ENCODE measurements at regions of chr12 and their contacts with region 1.

Region 1: GRCh38 chr12:16573398-16574077 is 32.4 kb downstream of the LMO3 start:
- DNase-seq: peak in 1 of 2 donors; percentile 95
- H3K4me3 ChIP-seq: no peak overlapping the region
- H3K27ac ChIP-seq: no peak overlapping the region
- H3K4me1 ChIP-seq: no peaks in the 10 kb centered on the region
- H3K27me3 ChIP-seq: no peaks in the 10 kb centered on the region
- CTCF ChIP-seq: no peak
- POLR2A ChIP-seq: no peak

Region 2: GRCh38 chr12:16606201-16606849 is 32.8 kb after region 1 on chr12:
- intact Hi-C with region 1: loop called (anchors 1 kb)
- DNase-seq: no peak
- H3K4me3 ChIP-seq: peak overlapping the region; percentile 51 to 57
- H3K27ac ChIP-seq: peak overlapping the region; percentile 82
- H3K4me1 ChIP-seq: peaks cover 4% of the 10 kb centered on the region
- H3K27me3 ChIP-seq: no peaks in the 10 kb centered on the region
- CTCF ChIP-seq: no peak
- POLR2A ChIP-seq: no peak

Region 3: GRCh38 chr12:17793854-17794253 is 1220.3 kb after region 1 on chr12:
- intact Hi-C with region 1: no loop called
- DNase-seq: no peak
- H3K4me3 ChIP-seq: no peak overlapping the region
- H3K27ac ChIP-seq: no peak overlapping the region
- H3K4me1 ChIP-seq: no peaks in the 10 kb centered on the region
- H3K27me3 ChIP-seq: no peaks in the 10 kb centered on the region
- CTCF ChIP-seq: no peak
- POLR2A ChIP-seq: no peak

Measured in vagina (tissue), 2 donors.